Ovary (tissue), 10 donors: ENCODE measurements at regions of chr16 and their contacts with region 1.

Region 1: GRCh38 chr16:72434159-72434558 is 262.2 kb upstream of the PMFBP1 start:
- DNase-seq: no peak
- H3K4me3 ChIP-seq: no peak overlapping the region
- H3K27ac ChIP-seq: no peak overlapping the region
- H3K4me1 ChIP-seq: no peaks in the 10 kb centered on the region
- H3K27me3 ChIP-seq: no peaks in the 10 kb centered on the region
- CTCF ChIP-seq: no peak
- EP300 ChIP-seq: no peak
- POLR2A ChIP-seq: no peak

Region 2: DNA sequence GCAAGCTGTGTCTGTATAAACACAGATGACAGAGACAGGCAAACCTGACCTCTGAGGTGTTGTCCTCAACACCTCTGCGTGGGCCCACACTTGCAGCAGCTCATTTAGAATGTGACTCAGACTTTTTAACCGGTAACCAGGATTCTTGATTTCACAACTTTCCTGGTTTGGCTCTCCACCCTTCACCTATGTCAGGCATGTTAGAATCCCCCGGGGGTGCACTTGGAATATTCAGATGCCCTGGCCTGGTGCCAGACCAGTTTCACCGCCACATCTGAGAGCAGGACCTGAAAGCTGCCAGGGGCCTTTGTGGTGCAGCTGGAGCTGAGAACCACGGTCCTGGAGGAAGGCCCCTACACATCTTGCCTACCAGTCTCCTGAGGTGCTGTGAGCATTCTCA is 420.8 kb before region 1 on chr16:
- intact Hi-C with region 1: no loop called
- DNase-seq: peak; percentile 37 to 69 (median 57)
- H3K4me3 ChIP-seq: no peak overlapping the region
- H3K27ac ChIP-seq: peak overlapping the region in 1 of 2 donors; percentile 42
- H3K4me1 ChIP-seq: peaks cover 8% of the 10 kb centered on the region
- H3K27me3 ChIP-seq: no peaks in the 10 kb centered on the region
- CTCF ChIP-seq: no peak
- EP300 ChIP-seq: no peak
- POLR2A ChIP-seq: no peak

Region 3: GRCh38 chr16:72380283-72380682 is 53.9 kb before region 1 on chr16:
- intact Hi-C with region 1: loop called in 1 of 4 experiments (anchors 10 kb)
- DNase-seq: no peak
- H3K4me3 ChIP-seq: no peak overlapping the region
- H3K27ac ChIP-seq: no peak overlapping the region
- H3K4me1 ChIP-seq: no peaks in the 10 kb centered on the region
- H3K27me3 ChIP-seq: no peaks in the 10 kb centered on the region
- CTCF ChIP-seq: no peak
- EP300 ChIP-seq: no peak
- POLR2A ChIP-seq: no peak

Region 4: DNA sequence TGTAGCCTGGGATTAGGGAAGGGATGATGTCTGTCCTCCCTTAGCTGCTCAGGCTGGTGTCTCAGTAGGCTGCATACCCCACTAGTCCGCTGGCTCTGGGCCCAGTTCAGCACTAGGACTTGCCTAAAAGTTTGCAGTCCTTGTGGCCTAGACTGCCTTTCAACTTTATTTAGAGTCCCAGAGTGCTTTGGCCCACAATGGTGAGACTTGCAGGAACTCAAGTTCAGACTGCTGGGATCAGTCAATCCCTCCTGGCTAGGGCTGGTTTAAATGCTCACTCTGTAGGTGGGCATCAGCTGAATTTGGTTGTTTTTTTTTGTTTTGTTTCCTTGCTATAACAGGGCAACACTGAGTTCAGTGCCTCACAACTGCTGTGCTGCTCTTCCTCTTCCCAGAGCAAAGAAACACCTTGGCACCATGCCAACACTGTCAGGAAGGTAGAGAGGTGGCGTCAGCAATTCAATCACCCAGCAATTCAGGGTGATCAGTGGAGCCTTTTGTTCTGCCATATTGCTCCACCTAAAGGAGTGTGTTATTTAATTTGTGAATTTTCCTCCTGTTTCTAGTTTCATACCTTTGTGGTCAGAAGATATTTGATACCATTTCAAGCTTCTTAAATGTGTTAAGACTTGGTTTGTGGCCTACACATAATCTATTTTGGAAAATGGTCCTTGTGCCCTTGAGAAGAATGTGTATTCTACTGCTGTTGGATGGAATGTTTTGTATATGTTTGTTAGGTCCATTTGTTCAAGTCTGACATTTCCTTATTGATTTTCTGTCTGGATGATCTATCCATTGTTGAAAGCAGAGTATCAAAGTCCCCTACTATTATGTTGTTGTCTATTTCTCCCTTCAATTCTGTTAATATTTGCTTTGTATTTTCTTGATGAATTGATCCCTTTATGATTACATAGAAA is 21.8 kb after region 1 on chr16:
- intact Hi-C with region 1: loop called in 1 of 4 experiments (anchors 2 kb)
- DNase-seq: no peak
- H3K4me3 ChIP-seq: no peak overlapping the region
- H3K27ac ChIP-seq: no peak overlapping the region
- H3K4me1 ChIP-seq: no peaks in the 10 kb centered on the region
- H3K27me3 ChIP-seq: no peaks in the 10 kb centered on the region
- CTCF ChIP-seq: no peak
- EP300 ChIP-seq: no peak
- POLR2A ChIP-seq: no peak